ENCODE measurements at regions of chr5 and their contacts with region 1.

Region 1: GRCh38 chr5:90866333-90866732 is 307.7 kb downstream of the ADGRV1 start:
- DNase-seq: no peak
- ATAC-seq: peak in 2 of 4 donors; percentile 52 to 83
- H3K4me3 ChIP-seq: no peak overlapping the region
- H3K27ac ChIP-seq: no peak overlapping the region
- H3K4me1 ChIP-seq: peaks cover 6% of the 10 kb centered on the region
- H3K27me3 ChIP-seq: no peaks in the 10 kb centered on the region
- CTCF ChIP-seq: peak; percentile 60

Region 2: DNA sequence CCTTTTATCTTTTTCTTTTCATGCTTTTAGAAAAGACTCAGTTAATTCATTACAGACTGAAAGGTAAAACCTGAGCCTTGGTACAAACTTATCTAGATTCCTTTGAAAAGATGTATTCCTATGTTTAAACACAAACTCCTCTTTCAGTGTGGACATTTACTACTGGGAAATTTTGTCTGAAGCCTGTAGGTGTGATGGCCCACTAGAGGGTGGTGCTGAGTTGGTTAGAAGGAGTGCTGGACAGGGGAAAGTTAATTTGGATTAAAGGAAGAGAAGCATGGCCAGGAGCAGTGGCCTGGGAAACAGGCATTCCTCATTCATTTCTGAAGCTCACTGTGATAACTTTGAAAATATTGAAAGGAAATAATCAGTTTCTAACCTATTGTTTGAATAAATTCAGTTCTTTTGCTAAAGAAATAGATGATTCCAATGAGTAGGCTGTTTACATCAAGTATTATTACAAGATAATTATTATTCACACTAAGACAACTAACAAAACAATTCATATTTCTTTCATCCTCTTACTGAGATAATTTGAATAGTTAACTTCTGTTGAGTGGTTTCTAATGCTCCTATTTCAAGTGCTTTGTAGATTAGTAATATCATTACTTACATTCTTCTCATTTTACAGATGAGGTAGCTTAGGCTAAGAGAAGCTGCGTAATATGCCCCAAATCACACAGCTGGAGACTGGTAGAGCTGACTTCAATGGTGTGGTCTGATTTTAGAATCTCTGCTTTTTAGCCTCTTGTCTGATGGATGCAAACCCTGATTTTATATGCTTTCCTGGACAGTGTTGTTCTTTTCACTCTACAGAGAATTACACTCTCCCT is 156.8 kb before region 1 on chr5:
- intact Hi-C with region 1: no loop called
- DNase-seq: no peak
- ATAC-seq: no peak
- H3K4me3 ChIP-seq: no peak overlapping the region
- H3K27ac ChIP-seq: no peak overlapping the region
- H3K4me1 ChIP-seq: no peaks in the 10 kb centered on the region
- H3K27me3 ChIP-seq: peaks cover 0 to 2% (median 0%) of the 10 kb centered on the region in 3 donors
- CTCF ChIP-seq: peak; percentile 59

Region 3: GRCh38 chr5:91101600-91102379 is 235.5 kb after region 1 on chr5:
- intact Hi-C with region 1: loop called in 1 of 2 experiments (anchors 5 kb)
- DNase-seq: peak; percentile 60 to 73
- ATAC-seq: peak; percentile 90 to 99 (median 97)
- H3K4me3 ChIP-seq: no peak overlapping the region
- H3K27ac ChIP-seq: no peak overlapping the region
- H3K4me1 ChIP-seq: peaks cover 3% of the 10 kb centered on the region
- H3K27me3 ChIP-seq: no peaks in the 10 kb centered on the region
- CTCF ChIP-seq: peak; percentile 77

Region 4: GRCh38 chr5:91219803-91220371 is 353.6 kb after region 1 on chr5:
- intact Hi-C with region 1: loop called (anchors 10 kb)
- DNase-seq: no peak
- ATAC-seq: peak in 3 of 4 donors; percentile 51 to 68 (median 68)
- H3K4me3 ChIP-seq: no peak overlapping the region
- H3K27ac ChIP-seq: peak overlapping the region; percentile 31
- H3K4me1 ChIP-seq: no peaks in the 10 kb centered on the region
- H3K27me3 ChIP-seq: no peaks in the 10 kb centered on the region
- CTCF ChIP-seq: peak; percentile 30

Region 5: GRCh38 chr5:91225848-91226686 is 359.7 kb after region 1 on chr5:
- intact Hi-C with region 1: loop called in 1 of 2 experiments (anchors 10 kb)
- DNase-seq: no peak
- ATAC-seq: peak; percentile 51 to 85 (median 68)
- H3K4me3 ChIP-seq: no peak overlapping the region
- H3K27ac ChIP-seq: no peak overlapping the region
- H3K4me1 ChIP-seq: no peaks in the 10 kb centered on the region
- H3K27me3 ChIP-seq: no peaks in the 10 kb centered on the region
- CTCF ChIP-seq: peak; percentile 48

Region 6: DNA sequence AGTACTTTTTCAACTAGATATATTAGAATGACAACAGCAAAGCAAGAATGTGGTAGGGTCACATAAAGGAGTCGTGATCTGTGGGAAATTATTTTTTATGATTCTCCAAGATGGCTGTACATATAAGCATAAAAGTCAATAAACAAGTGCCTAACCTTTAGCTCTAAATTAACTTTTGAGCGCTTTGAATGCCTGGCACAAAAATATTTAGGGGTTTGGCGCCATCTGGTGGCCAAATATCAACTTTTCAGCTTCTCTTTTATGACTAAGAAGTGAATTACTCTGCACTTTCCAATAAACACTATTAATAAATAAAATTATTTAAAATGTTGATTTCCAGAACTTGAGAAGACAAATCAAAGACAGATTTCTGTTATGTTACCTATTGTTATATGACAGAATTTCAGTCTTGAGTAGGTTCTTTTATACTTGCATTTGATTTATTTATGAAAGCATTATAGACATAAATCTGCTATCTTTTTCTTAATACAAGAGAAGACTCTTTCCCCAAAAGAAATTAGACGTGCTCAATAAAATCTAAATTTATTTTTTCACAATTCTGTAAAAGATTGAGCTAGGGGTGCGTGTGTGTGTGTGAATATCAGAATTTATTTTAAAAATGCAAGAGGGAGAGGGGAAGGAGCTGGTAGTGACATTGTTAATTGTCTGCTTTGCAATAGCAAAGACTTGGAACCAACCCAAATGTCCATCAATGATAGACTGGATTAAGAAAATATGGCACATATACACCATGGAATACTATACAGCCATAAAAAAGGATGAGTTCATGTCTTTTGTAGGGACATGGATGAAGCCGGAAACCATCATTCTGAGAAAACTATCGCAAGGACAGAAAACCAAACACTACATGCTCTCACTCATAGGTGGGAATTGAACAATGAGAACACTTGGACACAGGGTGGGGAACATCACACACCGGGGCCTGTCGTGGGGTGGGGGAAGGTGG is 553.5 kb after region 1 on chr5:
- intact Hi-C with region 1: loop called (anchors 2 to 5 kb)
- DNase-seq: peak; percentile 34 to 51
- ATAC-seq: peak in 2 of 4 donors; percentile 21 to 67
- H3K4me3 ChIP-seq: no peak overlapping the region
- H3K27ac ChIP-seq: no peak overlapping the region
- H3K4me1 ChIP-seq: no peaks in the 10 kb centered on the region
- H3K27me3 ChIP-seq: no peaks in the 10 kb centered on the region
- CTCF ChIP-seq: peak; percentile 86

Measured in psoas muscle (tissue), 8 donors.